GM10248 (cell line): ENCODE measurements at regions of chr12 and their contacts with region 1.

Region 1: DNA sequence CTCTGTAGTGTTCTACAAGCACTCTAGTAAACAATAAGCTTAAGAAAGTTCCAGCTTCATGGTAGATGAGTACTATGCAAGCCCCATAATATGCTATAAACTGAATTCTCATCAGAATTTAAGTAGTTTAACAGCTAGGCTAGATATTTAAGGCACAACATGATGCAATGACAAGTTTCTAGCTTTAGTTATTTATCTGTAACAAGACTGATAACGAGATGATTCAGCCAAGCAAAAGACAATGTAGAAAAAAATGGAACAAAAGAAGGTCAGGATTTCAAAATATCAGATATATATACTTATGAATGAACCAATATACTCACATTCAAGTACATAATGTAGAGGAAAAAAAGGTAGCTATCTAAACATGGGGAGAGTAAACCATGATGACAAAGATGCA is 61.0 kb upstream of the RERGL start:
- DNase-seq: no peak
- CTCF ChIP-seq: no peak

Region 2: GRCh38 chr12:18084080-18084479 is 67.0 kb before region 1 on chr12:
- CTCF ChIA-PET with region 1: no interaction called
- POLR2A ChIA-PET with region 1: no interaction called
- DNase-seq: no peak
- CTCF ChIP-seq: no peak

Region 3: GRCh38 chr12:18139989-18140596 is 10.9 kb before region 1 on chr12:
- CTCF ChIA-PET with region 1: interaction called, 11 read pairs
- POLR2A ChIA-PET with region 1: no interaction called
- DNase-seq: no peak
- CTCF ChIP-seq: peak; percentile 47